Activated CD4-positive, alpha-beta memory T cell treated with anti-CD3 and anti-CD28 coated beads, Interleukin-2, amount 10 ng/mL, durations not matched to agents 7 days and 5 days (primary cell): ENCODE measurements at regions of chr2 and their contacts with region 1.

Region 1: DNA sequence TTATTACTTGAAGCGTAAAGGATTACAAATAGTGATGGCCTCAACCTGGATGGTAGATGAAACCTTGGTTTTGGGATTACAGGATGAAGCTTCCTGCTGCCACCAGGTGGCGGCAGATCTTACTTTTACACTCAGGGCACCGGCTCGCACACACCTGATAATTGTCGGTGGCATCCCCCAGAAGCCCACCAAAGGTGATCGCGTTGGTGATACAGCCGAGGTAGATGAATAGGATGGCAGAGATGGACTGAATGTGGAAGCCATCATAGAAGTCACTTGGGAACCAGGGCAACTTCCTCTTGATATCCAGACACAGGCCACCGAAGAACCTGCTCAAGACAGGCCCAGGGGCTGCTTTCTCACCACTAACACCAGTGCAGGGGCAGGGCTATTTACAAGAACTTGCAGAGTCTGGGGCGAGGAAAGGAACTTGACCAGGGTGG is 51.8 kb downstream of the MTHFD2 start:
- DNase-seq: peak; percentile 60
- H3K4me3 Mint-ChIP-seq: no peak overlapping the region
- H3K27ac Mint-ChIP-seq: no peak overlapping the region
- H3K4me1 Mint-ChIP-seq: peaks cover 8% of the 10 kb centered on the region
- H3K27me3 Mint-ChIP-seq: no peaks in the 10 kb centered on the region

Region 2: GRCh38 chr2:74238879-74239278 is 11.3 kb before region 1 on chr2:
- CTCF ChIA-PET with region 1: interaction called, 12 read pairs
- POLR2A ChIA-PET with region 1: no interaction called
- DNase-seq: no peak
- H3K4me3 Mint-ChIP-seq: no peak overlapping the region
- H3K27ac Mint-ChIP-seq: no peak overlapping the region
- H3K4me1 Mint-ChIP-seq: no peaks in the 10 kb centered on the region
- H3K27me3 Mint-ChIP-seq: no peaks in the 10 kb centered on the region

Region 3: DNA sequence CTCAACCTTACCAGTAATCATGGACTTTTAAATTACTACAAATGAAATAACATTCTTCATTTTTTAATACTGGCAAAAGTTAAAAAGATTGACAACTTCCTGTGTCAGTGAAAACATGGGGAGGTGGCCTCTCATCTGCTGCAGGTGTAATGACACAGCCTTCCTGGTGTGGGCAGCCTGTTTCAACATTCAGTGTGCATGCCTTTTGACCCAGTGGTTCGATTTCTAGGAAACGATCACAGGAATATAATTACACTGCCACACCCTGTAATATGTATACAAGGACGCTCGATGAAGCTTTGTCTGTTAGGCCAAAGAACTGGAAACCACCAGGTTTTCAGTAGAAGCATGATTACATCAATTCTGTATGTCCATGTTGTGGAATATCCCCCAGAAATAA is 16.9 kb after region 1 on chr2:
- CTCF ChIA-PET with region 1: interaction called, 15 read pairs
- POLR2A ChIA-PET with region 1: no interaction called
- DNase-seq: peak; percentile 80
- H3K4me3 Mint-ChIP-seq: no peak overlapping the region
- H3K27ac Mint-ChIP-seq: peak overlapping the region; percentile 85
- H3K4me1 Mint-ChIP-seq: peaks cover 31% of the 10 kb centered on the region
- H3K27me3 Mint-ChIP-seq: no peaks in the 10 kb centered on the region

Region 4: GRCh38 chr2:74391580-74392448 is 141.6 kb after region 1 on chr2:
- CTCF ChIA-PET with region 1: interaction called, 19 read pairs
- POLR2A ChIA-PET with region 1: interaction called, 4 read pairs
- DNase-seq: peak; percentile 95
- H3K4me3 Mint-ChIP-seq: peak overlapping the region; percentile 94
- H3K27ac Mint-ChIP-seq: peak overlapping the region; percentile 96
- H3K4me1 Mint-ChIP-seq: peaks cover 12% of the 10 kb centered on the region
- H3K27me3 Mint-ChIP-seq: peaks cover 6% of the 10 kb centered on the region

Region 5: DNA sequence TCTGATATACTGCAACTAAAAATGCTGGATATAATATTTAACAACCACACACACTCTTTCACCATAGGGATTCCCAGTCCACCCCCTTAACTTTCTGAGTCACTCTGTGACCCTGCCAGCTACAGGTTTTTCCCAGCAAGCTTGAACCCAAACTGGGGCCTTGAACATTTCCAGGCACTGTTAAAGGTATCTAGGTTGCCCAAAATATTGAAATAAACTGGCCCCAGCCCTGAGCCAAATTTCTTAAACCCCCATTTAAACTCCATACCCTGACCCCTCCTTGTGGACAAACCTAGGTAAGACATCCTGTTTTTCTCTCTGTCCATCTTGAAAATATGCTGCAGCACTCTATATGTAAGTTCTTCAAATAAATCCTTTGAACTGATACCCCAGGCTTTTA is 149.6 kb after region 1 on chr2:
- CTCF ChIA-PET with region 1: interaction called, 17 read pairs
- POLR2A ChIA-PET with region 1: no interaction called
- DNase-seq: no peak
- H3K4me3 Mint-ChIP-seq: no peak overlapping the region
- H3K27ac Mint-ChIP-seq: no peak overlapping the region
- H3K4me1 Mint-ChIP-seq: no peaks in the 10 kb centered on the region
- H3K27me3 Mint-ChIP-seq: peaks cover 5% of the 10 kb centered on the region

Region 6: DNA sequence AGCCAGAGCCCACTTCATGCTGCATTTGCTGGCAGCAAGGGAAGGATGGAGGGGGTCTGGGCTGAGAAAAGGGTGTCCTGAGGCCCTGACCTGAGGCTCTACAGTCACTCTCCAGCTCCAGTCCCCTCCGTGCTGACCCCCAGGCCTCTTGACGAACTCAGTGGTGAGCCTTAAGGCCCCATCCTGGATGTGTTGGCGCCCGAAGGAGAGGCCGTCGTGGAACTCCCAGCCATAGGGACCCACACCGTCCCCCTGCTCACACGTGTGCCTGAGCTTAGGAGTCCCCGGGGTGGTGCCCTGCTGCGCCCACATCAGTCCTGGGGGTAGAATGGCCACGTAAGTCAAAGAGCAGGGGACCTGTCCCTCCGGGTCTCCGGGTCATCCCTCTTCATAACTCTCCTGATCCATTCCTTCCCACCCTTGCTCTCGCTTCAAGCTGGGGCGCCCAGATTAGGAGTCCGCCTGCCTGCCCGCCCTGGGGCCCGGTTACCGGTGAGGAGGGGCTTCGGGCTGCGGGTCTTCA is 214.3 kb after region 1 on chr2:
- CTCF ChIA-PET with region 1: no interaction called
- POLR2A ChIA-PET with region 1: no interaction called
- DNase-seq: no peak
- H3K4me3 Mint-ChIP-seq: peak overlapping the region; percentile 99
- H3K27ac Mint-ChIP-seq: peak overlapping the region; percentile 67
- H3K4me1 Mint-ChIP-seq: peaks cover 41% of the 10 kb centered on the region
- H3K27me3 Mint-ChIP-seq: no peaks in the 10 kb centered on the region